ENCODE measurements at regions of chr10 and their contacts with region 1.

Region 1: DNA sequence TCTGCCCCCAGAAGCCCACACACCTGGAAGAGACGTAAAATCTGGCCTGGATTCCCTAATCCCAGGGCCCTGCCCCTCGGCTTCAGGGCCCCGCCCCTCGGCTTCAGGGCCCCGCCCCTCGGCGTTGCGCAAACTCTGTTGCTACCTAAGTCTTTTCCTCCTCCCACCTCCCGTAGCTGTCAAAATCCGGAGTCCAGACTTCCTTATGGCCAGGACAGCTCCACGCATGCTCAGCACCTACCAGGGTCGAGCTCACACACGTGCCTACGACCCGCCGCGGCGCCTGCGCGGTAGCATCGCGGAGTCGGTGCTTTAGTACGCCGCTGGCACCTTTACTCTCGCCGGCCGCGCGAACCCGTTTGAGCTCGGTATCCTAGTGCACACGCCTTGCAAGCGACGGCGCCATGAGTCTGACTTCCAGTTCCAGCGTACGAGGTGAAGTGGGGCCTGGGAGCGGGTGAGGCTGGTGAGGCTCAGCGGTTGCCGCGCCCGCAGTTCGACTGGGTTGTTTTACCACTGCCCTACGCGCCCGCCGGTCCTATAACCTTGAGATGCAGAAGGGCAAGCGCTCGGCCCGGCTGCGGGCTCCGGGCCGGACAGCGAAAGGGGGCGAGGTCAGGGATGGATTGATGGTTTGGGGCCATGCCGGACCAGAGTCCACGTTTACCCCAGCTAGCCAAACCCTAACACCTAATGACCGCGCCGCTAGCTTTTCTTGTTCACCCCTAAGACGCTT is at the start of gene CISD1:
- DNase-seq: peak; percentile 98 to 99
- ATAC-seq: peak; percentile 81 to 83
- H3K4me3 ChIP-seq: peak within 1 kb of the TSS; percentile 62 to 89 (median 84)
- H3K27ac ChIP-seq: peak within 1 kb of the TSS; percentile 88 to 97 (median 96)
- H3K4me1 ChIP-seq: peaks cover 24 to 36% of the 10 kb centered on the region in 2 donors
- H3K27me3 ChIP-seq: no peaks in the 10 kb centered on the region
- CTCF ChIP-seq: peak in 1 of 5 experiments; percentile 4
- POLR2A ChIP-seq: peak; percentile 90 to 91
- total RNA-seq, gene CISD1: 54.4 to 90.2 (median 71.1) TPM

Region 2: GRCh38 chr10:58189269-58189668 is 79.8 kb before region 1 on chr10:
- in situ Hi-C with region 1: no loop called
- intact Hi-C with region 1: loop called (anchors 5 kb)
- DNase-seq: peak; percentile 51 to 53
- ATAC-seq: peak; percentile 95 to 98
- H3K4me3 ChIP-seq: no peak overlapping the region
- H3K27ac ChIP-seq: peak overlapping the region; percentile 65 to 75 (median 66)
- H3K4me1 ChIP-seq: peaks cover 15 to 19% of the 10 kb centered on the region in 2 donors
- H3K27me3 ChIP-seq: no peaks in the 10 kb centered on the region
- CTCF ChIP-seq: no peak
- POLR2A ChIP-seq: peak in 1 of 2 donors; percentile 14

Region 3: DNA sequence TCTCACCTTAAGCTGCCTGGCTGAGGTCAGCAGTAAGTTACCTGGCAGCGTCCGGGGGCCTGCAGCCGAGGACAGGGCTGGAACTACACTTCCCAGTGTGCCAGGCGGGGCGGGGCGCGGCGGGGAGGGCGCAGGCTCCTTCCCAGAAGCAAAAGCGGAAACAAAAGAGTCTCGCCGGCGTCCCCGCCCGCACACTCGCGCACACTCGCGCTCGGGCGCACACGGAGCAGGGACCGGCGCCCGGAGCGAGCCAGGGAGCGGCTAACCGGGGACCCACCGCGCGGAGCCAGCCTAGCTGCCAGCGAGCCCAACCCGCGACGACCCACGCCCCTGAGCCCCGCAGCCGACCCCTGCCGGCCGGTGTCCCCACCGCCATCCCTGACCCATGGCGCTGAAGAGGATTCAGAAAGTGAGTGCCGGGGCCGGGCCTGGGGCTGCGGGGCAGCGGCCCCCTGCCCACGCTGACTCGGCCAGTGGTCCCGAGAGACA is 65.8 kb after region 1 on chr10 and contains the start of gene UBE2D1:
- in situ Hi-C with region 1: no loop called
- intact Hi-C with region 1: loop called (anchors 2 kb)
- DNase-seq: peak; percentile 90
- ATAC-seq: peak; percentile 63 to 78
- H3K4me3 ChIP-seq: peak within 1 kb of the TSS; percentile 78 to 98 (median 92)
- H3K27ac ChIP-seq: peak within 1 kb of the TSS; percentile 96 to 100 (median 98)
- H3K4me1 ChIP-seq: peaks cover 19 to 34% of the 10 kb centered on the region in 2 donors
- H3K27me3 ChIP-seq: no peaks in the 10 kb centered on the region
- CTCF ChIP-seq: peak in 4 of 5 experiments; percentile 14 to 53 (median 26)
- POLR2A ChIP-seq: peak; percentile 98
- total RNA-seq, gene UBE2D1: 62.0 to 178 (median 81.6) TPM

Region 4: DNA sequence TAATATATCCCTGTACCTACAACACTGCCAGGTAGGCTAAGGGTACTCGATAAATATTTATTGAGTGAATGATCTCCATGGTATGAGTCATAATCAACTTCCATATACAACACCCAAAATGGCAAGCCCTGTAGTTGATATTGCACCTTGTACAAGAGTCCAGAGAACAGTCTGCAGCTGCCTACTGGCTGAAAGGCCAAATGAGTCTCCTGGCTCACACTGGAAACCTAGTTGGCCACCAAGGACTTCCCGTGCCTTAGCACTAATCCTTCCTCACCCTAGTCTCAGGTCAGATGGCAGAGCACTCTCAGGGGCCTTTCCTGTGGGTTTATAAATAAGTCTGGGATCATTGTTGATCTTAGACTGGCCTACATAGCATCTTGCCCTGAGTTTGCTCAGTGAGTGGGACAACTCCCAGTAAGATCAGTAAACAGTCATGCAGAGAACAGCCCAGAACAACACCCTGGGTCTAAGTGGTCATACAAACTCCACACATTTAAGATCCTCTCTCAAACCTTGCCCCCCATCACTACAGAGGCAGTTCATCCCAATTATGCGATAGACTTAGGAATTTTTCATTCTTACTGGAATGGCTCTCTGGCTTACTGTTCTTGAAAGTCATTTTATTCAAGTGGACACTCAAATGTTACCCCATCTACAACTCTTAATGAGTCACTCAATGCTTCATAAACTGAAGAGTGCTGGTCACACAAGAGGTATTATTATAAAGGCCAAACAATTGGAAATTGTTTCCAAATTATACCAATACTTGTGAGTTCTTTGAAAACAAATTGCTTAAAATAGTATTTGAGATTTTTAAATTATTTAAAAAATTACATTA is 1455.3 kb after region 1 on chr10:
- in situ Hi-C with region 1: no loop called
- intact Hi-C with region 1: loop called (anchors 10 kb)
- DNase-seq: peak; percentile 83 to 85
- ATAC-seq: peak; percentile 97
- H3K4me3 ChIP-seq: no peak overlapping the region
- H3K27ac ChIP-seq: peak overlapping the region; percentile 75 to 91 (median 80)
- H3K4me1 ChIP-seq: peaks cover 37 to 39% of the 10 kb centered on the region in 2 donors
- H3K27me3 ChIP-seq: no peaks in the 10 kb centered on the region
- CTCF ChIP-seq: no peak
- POLR2A ChIP-seq: peak in 1 of 2 donors; percentile 67